Activated naive CD4-positive, alpha-beta T cell treated with anti-CD3 and anti-CD28 coated beads for 36 hours (primary cell): ENCODE measurements at regions of chr5 and their contacts with region 1.

Region 1: DNA sequence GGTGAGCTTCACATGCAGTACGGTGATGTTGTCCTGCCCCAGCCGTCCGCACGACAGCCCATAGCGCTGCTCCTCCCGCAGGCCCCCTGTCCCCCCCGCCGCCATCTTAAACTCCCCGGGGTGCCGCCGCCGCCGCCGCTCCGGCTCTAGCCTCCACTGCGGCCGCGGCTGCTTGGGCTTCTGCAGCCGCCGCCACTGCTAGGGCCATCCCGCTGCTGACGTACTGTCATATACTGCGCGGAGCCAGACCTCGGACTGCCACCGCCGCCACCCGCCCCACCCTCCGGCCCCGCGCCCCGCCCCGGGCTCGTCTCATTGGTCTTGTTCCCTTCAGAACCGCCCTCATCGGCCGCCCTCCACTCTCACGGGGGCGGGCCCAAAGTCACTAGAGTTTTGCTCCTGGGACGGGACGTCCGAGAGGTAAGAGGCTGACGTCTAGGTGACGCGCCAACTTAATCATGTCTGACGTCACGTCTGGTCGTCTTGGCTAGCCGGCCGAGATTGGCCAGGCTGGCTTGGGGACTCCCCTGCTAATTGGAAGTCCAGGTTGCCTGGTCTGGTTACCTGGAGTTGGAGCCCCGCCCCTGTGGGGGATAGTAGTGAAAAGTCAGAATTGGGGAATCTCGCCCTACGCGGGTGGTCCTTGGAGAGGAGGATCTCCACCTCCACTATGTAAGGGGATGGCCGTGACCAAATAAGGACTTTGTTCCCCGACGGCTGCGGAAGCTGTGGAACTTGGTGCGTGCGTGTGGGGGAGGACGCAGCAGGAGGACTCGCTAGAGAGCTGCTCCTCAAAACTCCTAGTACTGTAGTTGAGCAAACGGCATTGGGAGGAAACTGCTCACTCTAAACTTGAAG is at the start of gene ELL2:
- DNase-seq: peak; percentile 98
- H3K4me3 Mint-ChIP-seq: peak within 1 kb of the TSS; percentile 93
- H3K27ac Mint-ChIP-seq: peak within 1 kb of the TSS; percentile 89
- H3K4me1 Mint-ChIP-seq: peaks cover 40% of the 10 kb centered on the region
- H3K27me3 Mint-ChIP-seq: no peaks in the 10 kb centered on the region
- total RNA-seq, gene ELL2: 75.0 to 78.6 TPM

Region 2: DNA sequence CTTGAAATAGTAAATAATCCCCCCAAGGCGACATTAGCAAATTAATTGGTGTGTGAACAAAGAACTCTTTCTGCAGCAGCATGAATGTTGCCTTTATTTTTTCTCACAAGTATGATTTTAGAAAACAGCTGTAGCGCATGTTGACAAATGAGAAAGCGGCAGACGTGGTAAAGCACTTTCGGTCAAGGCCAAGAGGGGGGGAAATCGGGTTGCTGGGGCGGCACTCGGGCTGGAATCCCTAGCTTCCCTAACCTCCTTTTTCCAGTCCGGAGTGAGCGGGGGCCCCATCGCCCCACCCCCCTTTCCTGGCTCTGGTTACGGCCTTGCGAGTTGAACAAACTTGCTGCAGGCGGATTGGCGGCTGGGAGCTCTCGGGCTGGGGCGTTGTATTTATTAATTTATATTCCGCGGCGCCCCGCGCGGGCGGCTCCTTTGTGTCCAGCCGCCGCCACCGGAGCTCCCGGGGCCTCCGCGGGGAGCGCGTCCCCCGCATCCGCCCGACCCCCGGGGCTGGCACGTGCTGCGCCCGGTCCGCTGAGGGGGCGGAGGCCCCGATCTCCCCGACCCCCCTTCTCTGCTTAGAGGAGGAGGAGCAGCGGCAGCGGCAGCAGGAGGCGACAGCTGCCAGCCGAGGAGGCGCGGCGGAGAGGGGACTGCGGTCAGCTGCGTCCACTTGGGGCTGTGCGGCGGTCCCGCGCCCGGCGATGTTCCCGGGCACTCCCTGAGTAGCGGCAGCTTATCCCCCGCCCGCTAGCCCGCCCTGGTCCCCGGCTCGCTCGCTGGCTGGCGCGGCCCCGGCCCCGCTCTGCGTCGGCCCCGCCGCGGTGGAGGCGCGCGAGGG is 230.9 kb before region 1 on chr5 and contains the start of gene RHOBTB3:
- CTCF ChIA-PET with region 1: no interaction called
- intact Hi-C with region 1: loop called (anchors 5 kb)
- DNase-seq: peak; percentile 28
- H3K4me3 Mint-ChIP-seq: peak within 1 kb of the TSS; percentile 75
- H3K27ac Mint-ChIP-seq: no peak within 1 kb of the TSS
- H3K4me1 Mint-ChIP-seq: peaks cover 39% of the 10 kb centered on the region
- H3K27me3 Mint-ChIP-seq: peaks cover 37% of the 10 kb centered on the region
- total RNA-seq, gene RHOBTB3: 1.5 to 2.4 TPM

Region 3: GRCh38 chr5:95850391-95850894 is 111.4 kb before region 1 on chr5:
- CTCF ChIA-PET with region 1: no interaction called
- intact Hi-C with region 1: no loop called
- DNase-seq: no peak
- H3K4me3 Mint-ChIP-seq: no peak overlapping the region
- H3K27ac Mint-ChIP-seq: no peak overlapping the region
- H3K4me1 Mint-ChIP-seq: no peaks in the 10 kb centered on the region
- H3K27me3 Mint-ChIP-seq: no peaks in the 10 kb centered on the region

Region 4: GRCh38 chr5:95949810-95950209 is 12.0 kb before region 1 on chr5:
- CTCF ChIA-PET with region 1: interaction called, 6 read pairs
- intact Hi-C with region 1: loop called (anchors 1 kb)
- DNase-seq: no peak
- H3K4me3 Mint-ChIP-seq: no peak overlapping the region
- H3K27ac Mint-ChIP-seq: no peak overlapping the region
- H3K4me1 Mint-ChIP-seq: peaks cover 20% of the 10 kb centered on the region
- H3K27me3 Mint-ChIP-seq: no peaks in the 10 kb centered on the region

Region 5: DNA sequence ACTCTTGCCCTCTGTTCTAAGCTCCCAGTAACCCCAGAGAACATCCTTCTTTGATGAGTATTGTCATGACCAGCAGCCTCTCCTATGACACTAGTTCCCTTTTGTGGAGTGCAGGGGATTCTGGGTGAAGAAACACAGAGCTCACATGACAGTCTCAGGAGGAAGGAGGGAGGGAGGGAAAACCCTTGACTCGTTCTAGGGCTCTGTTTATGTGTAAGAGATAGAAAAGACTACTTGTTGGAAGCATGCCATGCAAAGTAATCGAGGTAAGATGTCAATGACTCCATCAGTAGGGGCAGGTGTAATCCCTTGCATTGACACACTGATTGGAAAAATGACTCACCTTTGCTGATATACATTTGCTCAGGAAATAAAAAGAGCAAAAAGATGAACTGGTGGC is 190.0 kb after region 1 on chr5:
- CTCF ChIA-PET with region 1: no interaction called
- intact Hi-C with region 1: loop called (anchors 1 kb)
- DNase-seq: peak; percentile 63
- H3K4me3 Mint-ChIP-seq: no peak overlapping the region
- H3K27ac Mint-ChIP-seq: peak overlapping the region; percentile 10
- H3K4me1 Mint-ChIP-seq: peaks cover 6% of the 10 kb centered on the region
- H3K27me3 Mint-ChIP-seq: no peaks in the 10 kb centered on the region

Region 6: GRCh38 chr5:96536991-96537785 is 575.3 kb after region 1 on chr5:
- CTCF ChIA-PET with region 1: no interaction called
- intact Hi-C with region 1: loop called (anchors 1 kb)
- DNase-seq: no peak
- H3K4me3 Mint-ChIP-seq: no peak overlapping the region
- H3K27ac Mint-ChIP-seq: peak overlapping the region; percentile 83
- H3K4me1 Mint-ChIP-seq: peaks cover 32% of the 10 kb centered on the region
- H3K27me3 Mint-ChIP-seq: no peaks in the 10 kb centered on the region

Region 7: GRCh38 chr5:96807075-96807654 is 845.3 kb after region 1 on chr5:
- CTCF ChIA-PET with region 1: no interaction called
- intact Hi-C with region 1: loop called (anchors 5 kb)
- DNase-seq: peak; percentile 48
- H3K4me3 Mint-ChIP-seq: peak overlapping the region; percentile 86
- H3K27ac Mint-ChIP-seq: peak overlapping the region; percentile 97
- H3K4me1 Mint-ChIP-seq: peaks cover 80% of the 10 kb centered on the region
- H3K27me3 Mint-ChIP-seq: no peaks in the 10 kb centered on the region